Breast epithelium (tissue), 4 donors: ENCODE measurements at regions of chr20 and their contacts with region 1.

Region 1: DNA sequence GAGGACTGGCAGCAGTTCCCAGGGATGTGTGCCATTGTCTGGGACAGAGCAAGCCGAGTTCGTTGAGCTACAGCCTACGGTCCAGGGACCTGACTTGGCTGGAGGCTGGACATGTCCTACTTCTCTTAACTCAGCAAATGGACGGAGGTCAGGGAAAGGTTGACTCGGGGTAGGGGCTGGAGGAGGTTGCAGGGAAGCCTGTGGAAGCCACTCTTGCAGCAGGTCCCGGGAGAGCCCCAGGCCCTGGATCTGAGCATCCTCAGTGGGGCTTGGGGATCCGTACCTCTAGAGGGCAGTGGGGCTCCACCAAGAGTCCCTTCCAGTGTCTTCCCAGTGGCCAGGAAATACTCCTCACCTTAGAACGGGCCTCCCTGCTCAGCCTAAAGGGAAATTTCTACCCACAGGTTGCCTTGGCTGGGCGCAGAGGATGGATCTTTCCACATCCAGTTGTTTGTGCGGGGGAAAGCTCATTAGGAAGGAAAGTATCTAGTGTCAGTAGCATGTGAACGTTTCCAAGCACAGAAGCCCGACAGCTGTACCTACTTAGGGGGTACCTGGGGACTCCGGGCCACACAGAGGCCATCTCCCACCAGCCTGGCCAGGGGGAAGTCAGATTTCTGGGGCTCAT is 170.2 kb downstream of the NFATC2 start:
- DNase-seq: peak; percentile 65 to 68
- H3K4me3 ChIP-seq: no peak overlapping the region
- H3K27ac ChIP-seq: no peak overlapping the region
- H3K4me1 ChIP-seq: no peaks in the 10 kb centered on the region
- H3K27me3 ChIP-seq: no peaks in the 10 kb centered on the region
- CTCF ChIP-seq: peak; percentile 30 to 92 (median 83)
- POLR2A ChIP-seq: no peak

Region 2: GRCh38 chr20:51156041-51156982 is 216.0 kb before region 1 on chr20:
- intact Hi-C with region 1: no loop called
- DNase-seq: peak in 1 of 2 donors; percentile 49
- H3K4me3 ChIP-seq: peak overlapping the region in 1 of 3 donors; percentile 37
- H3K27ac ChIP-seq: peak overlapping the region; percentile 47 to 63
- H3K4me1 ChIP-seq: no peaks in the 10 kb centered on the region
- H3K27me3 ChIP-seq: no peaks in the 10 kb centered on the region
- CTCF ChIP-seq: no peak
- POLR2A ChIP-seq: no peak

Region 3: DNA sequence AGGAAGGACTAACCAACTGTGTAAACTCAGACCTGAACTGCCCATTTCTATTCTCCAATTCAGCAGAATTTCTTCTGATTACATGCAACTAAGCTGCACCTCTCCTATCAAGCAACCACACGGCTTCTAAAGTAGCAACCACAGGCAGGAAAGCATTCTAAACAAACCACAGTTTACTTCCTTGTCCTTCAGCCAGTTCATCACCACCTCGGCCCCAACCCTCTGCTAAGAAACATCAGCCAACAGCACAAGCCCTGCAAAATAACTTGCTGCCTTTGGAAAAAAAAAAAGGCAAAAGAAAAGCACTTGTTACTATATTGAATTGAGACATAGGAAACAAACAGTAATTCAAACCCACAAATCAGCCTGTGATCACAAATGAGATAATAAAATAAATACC is 29.9 kb after region 1 on chr20:
- intact Hi-C with region 1: loop called (anchors 1 kb)
- DNase-seq: peak in 1 of 2 donors; percentile 30
- H3K4me3 ChIP-seq: no peak overlapping the region
- H3K27ac ChIP-seq: no peak overlapping the region
- H3K4me1 ChIP-seq: no peaks in the 10 kb centered on the region
- H3K27me3 ChIP-seq: no peaks in the 10 kb centered on the region
- CTCF ChIP-seq: no peak
- POLR2A ChIP-seq: no peak

Region 4: DNA sequence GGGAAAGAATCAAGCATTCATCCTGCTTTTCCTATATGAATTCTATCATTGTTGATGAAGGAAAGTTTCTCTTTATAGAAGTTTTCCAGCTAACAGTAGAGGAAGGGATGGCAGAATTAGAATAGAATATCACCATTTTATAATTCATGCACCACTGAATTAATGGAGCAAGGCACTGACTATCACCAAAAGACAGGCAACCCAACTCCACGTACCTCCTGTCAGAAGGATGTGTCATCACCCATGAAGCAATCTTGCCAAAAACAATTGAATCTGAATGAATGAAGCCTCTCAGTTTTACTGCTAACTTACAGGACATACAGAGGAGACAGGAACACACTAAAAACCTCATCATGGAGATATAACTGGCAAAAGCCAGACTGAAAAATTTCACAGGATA is 47.8 kb after region 1 on chr20:
- intact Hi-C with region 1: no loop called
- DNase-seq: no peak
- H3K4me3 ChIP-seq: no peak overlapping the region
- H3K27ac ChIP-seq: no peak overlapping the region
- H3K4me1 ChIP-seq: no peaks in the 10 kb centered on the region
- H3K27me3 ChIP-seq: no peaks in the 10 kb centered on the region
- CTCF ChIP-seq: no peak
- POLR2A ChIP-seq: no peak

Region 5: GRCh38 chr20:51595058-51595532 is 222.8 kb after region 1 on chr20:
- intact Hi-C with region 1: loop called (anchors 10 kb)
- DNase-seq: peak; percentile 87 to 92
- H3K4me3 ChIP-seq: no peak overlapping the region
- H3K27ac ChIP-seq: no peak overlapping the region
- H3K4me1 ChIP-seq: no peaks in the 10 kb centered on the region
- H3K27me3 ChIP-seq: no peaks in the 10 kb centered on the region
- CTCF ChIP-seq: peak; percentile 89 to 96 (median 94)
- POLR2A ChIP-seq: no peak